Naive thymus-derived CD4-positive, alpha-beta T cell (primary cell): ENCODE measurements at regions of chr20 and their contacts with region 1.

Region 1: DNA sequence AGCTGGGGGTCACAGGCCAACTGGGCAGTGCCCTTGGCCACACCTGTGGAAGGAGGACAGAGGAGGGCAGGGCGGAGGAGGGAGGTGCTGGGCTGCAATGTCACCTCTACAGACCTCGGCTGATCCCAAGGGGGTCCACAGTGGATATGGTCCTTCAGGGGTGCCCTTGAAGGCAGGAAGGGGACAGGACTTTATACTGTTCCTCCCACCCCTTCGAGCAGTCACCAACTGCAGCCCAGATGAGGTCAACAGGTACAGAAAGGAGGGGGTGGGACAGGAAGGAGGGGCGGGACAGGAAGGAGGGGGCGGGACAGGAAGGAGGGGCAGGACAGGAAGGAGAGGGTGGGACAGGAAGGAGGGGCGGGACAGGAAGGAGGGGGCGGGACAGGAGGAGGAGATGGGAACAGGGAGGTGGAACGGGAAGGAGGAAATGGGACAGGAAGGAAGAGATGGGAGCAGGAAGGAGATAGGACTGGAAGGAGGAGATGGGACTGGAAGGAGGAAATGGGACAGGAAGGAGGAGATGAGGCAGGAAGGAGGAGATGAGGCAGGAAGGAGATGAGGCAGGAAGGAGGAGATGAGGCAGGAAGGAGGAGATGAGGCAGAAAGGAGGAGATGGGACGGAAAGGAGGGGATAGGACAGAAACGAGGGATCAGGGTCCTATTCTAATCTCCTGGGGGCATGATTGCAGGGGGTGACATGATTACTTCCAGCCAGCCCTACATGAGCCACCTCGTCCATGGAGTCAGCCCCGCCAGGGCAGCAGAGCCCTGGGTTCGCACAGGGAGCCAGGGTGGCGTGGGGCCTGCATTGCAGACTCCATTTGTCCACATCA is 19.4 kb upstream of the MRGBP start:
- DNase-seq: peak in 7 of 9 donors; percentile 35 to 70 (median 57)
- ATAC-seq: peak; percentile 78
- H3K4me3 ChIP-seq: peak overlapping the region; percentile 49
- H3K4me3 Mint-ChIP-seq: peak overlapping the region; percentile 51 to 91 (median 66)
- H3K27ac ChIP-seq: peak overlapping the region; percentile 77
- H3K27ac Mint-ChIP-seq: peak overlapping the region; percentile 90 to 95 (median 93)
- H3K4me1 ChIP-seq: peaks cover 24 to 49% of the 10 kb centered on the region in 2 donors
- H3K4me1 Mint-ChIP-seq: peaks cover 35 to 65% (median 58%) of the 10 kb centered on the region in 7 donors
- H3K27me3 ChIP-seq: no peaks in the 10 kb centered on the region
- H3K27me3 Mint-ChIP-seq: no peaks in the 10 kb centered on the region

Region 2: GRCh38 chr20:62652051-62652926 is 124.6 kb before region 1 on chr20:
- CTCF ChIA-PET with region 1: interaction called, 3 read pairs
- POLR2A ChIA-PET with region 1: interaction called, 4 read pairs
- intact Hi-C with region 1: loop called in 1 of 2 experiments (anchors 5 kb)
- DNase-seq: peak; percentile 44 to 80 (median 75)
- ATAC-seq: peak; percentile 78
- H3K4me3 ChIP-seq: peak overlapping the region; percentile 40
- H3K4me3 Mint-ChIP-seq: peak overlapping the region; percentile 80 to 95 (median 84)
- H3K27ac ChIP-seq: peak overlapping the region; percentile 81
- H3K27ac Mint-ChIP-seq: peak overlapping the region; percentile 93 to 99 (median 97)
- H3K4me1 ChIP-seq: peaks cover 17 to 20% of the 10 kb centered on the region in 2 donors
- H3K4me1 Mint-ChIP-seq: peaks cover 11 to 45% (median 30%) of the 10 kb centered on the region in 7 donors
- H3K27me3 ChIP-seq: no peaks in the 10 kb centered on the region
- H3K27me3 Mint-ChIP-seq: no peaks in the 10 kb centered on the region

Region 3: DNA sequence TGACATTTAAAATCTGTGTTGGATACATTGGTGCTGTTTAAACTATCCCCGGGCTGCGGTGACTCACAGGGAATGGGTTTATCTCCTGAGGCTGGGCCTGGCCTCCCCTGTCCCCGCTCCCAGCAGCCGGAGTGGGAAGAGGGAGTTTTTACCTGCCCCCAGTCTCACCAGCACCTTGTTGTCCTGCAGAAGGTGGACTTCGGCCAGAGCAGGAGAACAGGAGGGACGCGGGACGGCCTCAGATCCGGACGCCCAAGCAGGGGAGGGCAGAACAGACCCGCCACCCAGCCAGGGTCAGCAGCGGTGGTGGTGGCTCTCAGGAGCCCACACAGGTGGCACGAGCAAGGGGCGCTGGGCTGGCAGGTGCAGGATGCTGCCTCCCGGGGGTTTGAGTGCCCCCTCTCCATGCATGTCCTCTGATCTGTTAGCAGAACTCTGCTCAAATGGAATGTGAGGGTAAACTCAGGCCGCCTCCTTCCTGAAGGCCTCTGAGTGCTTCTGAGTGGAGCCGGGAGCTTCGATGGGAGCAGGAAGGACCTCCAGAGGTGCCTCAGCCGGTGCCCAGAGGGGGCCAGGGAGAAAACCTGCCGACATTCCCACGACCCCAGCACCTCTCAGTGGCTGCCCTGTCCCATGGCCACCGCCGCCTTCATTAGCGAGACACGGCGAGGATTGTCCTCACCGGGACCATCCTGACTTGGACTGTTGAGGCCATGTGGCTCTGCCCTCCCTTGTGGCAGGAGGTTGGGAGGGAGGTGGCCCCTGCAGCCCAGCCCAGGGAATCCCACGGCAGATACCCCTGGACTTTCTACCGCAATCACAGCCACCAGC is 24.0 kb before region 1 on chr20:
- CTCF ChIA-PET with region 1: no interaction called
- POLR2A ChIA-PET with region 1: no interaction called
- intact Hi-C with region 1: no loop called
- DNase-seq: no peak
- ATAC-seq: no peak
- H3K4me3 ChIP-seq: no peak overlapping the region
- H3K4me3 Mint-ChIP-seq: no peak overlapping the region
- H3K27ac ChIP-seq: no peak overlapping the region
- H3K27ac Mint-ChIP-seq: no peak overlapping the region
- H3K4me1 ChIP-seq: no peaks in the 10 kb centered on the region
- H3K4me1 Mint-ChIP-seq: peaks cover 0 to 11% (median 0%) of the 10 kb centered on the region in 7 donors
- H3K27me3 ChIP-seq: no peaks in the 10 kb centered on the region
- H3K27me3 Mint-ChIP-seq: peaks cover 0 to 45% (median 7%) of the 10 kb centered on the region in 5 donors

Region 4: GRCh38 chr20:62808211-62808865 is 31.4 kb after region 1 on chr20:
- CTCF ChIA-PET with region 1: interaction called, 4 read pairs
- POLR2A ChIA-PET with region 1: interaction called, 3 read pairs
- intact Hi-C with region 1: loop called in 1 of 2 experiments (anchors 1 kb)
- DNase-seq: peak; percentile 58 to 84 (median 71)
- ATAC-seq: peak; percentile 70
- H3K4me3 ChIP-seq: no peak overlapping the region
- H3K4me3 Mint-ChIP-seq: peak overlapping the region in 9 of 10 donors; percentile 18 to 82 (median 57)
- H3K27ac ChIP-seq: peak overlapping the region; percentile 22
- H3K27ac Mint-ChIP-seq: peak overlapping the region in 7 of 9 donors; percentile 13 to 88 (median 65)
- H3K4me1 ChIP-seq: peaks cover 16 to 30% of the 10 kb centered on the region in 2 donors
- H3K4me1 Mint-ChIP-seq: peaks cover 16 to 33% (median 25%) of the 10 kb centered on the region in 7 donors
- H3K27me3 ChIP-seq: no peaks in the 10 kb centered on the region
- H3K27me3 Mint-ChIP-seq: no peaks in the 10 kb centered on the region